ENCODE measurements at regions of chr20 and their contacts with region 1.

Region 1: GRCh38 chr20:11716239-11716944 is 201.3 kb upstream of the BTBD3 start:
- DNase-seq: peak; percentile 71
- H3K4me3 ChIP-seq: no peak overlapping the region
- H3K27ac ChIP-seq: peak overlapping the region; percentile 25
- H3K27me3 ChIP-seq: no peaks in the 10 kb centered on the region
- CTCF ChIP-seq: peak; percentile 75

Region 2: GRCh38 chr20:11777387-11778205 is 61.2 kb after region 1 on chr20:
- CTCF ChIA-PET with region 1: no interaction called
- POLR2A ChIA-PET with region 1: no interaction called
- DNase-seq: no peak
- H3K4me3 ChIP-seq: peak overlapping the region; percentile 18
- H3K27ac ChIP-seq: peak overlapping the region; percentile 22
- H3K27me3 ChIP-seq: no peaks in the 10 kb centered on the region
- CTCF ChIP-seq: no peak

Region 3: DNA sequence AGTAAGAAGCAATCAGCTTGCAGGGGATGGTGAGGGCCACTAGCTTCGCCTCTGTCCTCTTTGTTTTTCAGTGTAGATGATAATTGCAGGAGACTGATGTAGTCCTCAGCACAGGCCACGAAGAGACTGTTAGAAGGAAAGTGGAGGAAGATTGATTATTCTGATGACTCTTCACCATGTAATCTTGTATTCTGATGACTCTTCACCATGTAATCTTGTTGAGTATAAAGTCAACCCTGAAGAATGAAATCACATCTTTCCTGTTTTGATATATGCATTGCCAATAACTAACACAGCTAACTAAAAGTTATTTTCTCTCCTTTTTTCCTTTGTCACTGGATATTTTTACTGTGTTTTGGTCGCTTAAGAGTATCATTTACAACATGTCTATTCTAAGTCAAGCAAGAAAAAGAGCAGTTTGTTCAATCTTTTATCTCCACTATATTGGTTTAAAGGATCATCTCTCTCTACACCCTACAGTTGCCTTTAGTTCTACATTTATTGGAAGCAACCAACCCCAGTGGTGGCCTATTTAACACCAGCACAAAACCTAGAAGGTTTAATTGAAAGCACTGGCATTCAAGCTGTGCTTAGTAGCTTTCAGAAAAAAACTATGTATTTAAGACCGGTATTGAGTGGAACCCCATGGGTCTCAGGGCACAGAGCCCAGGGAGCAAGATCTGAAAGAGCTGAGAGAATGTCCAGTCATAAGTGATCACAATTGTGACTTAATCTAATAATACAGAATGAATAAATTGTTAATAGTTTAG is 94.1 kb after region 1 on chr20:
- CTCF ChIA-PET with region 1: interaction called, 3 read pairs
- POLR2A ChIA-PET with region 1: interaction called, 10 read pairs
- DNase-seq: peak; percentile 61
- H3K4me3 ChIP-seq: no peak overlapping the region
- H3K27ac ChIP-seq: peak overlapping the region; percentile 84
- H3K27me3 ChIP-seq: no peaks in the 10 kb centered on the region
- CTCF ChIP-seq: no peak